ENCODE measurements at regions of chr1 and their contacts with region 1.

Region 1: DNA sequence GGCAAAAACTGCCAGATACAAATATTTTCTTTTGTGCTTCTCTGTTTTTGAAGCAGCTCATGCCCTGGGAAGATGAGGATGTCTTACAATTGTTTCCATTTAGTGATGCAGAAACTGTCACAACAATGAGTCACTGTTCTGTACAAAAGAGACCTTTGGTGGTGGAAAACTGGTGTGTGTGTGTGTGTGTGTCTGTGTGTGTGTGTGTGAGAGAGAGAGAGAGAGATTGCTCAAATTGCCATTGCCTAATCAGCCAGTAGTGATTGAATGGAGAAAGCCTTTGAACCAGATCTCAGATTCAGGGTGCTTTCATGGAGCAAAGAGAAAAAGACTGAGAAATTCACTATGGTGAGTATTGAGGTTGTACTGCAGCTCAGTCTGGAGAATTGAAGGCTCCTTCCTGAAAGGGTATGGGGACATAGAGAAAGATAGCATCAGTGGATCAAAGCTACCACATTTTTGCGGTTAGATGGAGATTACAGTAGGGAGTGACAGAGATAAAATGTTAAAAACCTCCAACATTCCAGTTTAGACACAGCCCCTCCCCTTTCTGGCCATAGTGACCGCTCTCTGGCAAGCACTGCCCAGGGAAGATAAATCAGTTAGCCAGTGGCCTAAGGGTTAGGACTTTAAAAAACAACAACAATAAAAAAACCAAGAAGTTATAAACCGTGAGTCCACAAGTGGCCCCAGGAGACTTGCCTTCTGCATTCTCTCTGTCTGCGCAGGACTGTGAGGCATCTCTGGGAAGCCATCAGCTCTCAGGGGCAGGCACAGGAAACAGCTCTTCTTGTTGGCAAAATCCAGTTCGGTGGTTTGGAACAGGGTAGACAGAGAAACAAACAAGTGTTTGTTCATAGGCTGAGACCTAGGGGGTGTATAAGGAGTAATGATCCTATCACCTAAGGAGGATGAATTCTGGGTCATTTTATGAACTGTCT is 406.5 kb downstream of the DUSP10 start:
- DNase-seq: peak; percentile 80 to 84
- H3K4me3 ChIP-seq: no peak overlapping the region
- H3K4me3 Mint-ChIP-seq: peak overlapping the region; percentile 7
- H3K27ac Mint-ChIP-seq: peak overlapping the region; percentile 73
- H3K4me1 ChIP-seq: peaks cover 27% of the 10 kb centered on the region
- H3K4me1 Mint-ChIP-seq: peaks cover 25% of the 10 kb centered on the region
- H3K27me3 ChIP-seq: no peaks in the 10 kb centered on the region
- H3K27me3 Mint-ChIP-seq: no peaks in the 10 kb centered on the region
- CTCF ChIP-seq: no peak

Region 2: GRCh38 chr1:221263831-221264767 is 71.3 kb before region 1 on chr1:
- CTCF ChIA-PET with region 1: interaction called, 5 read pairs
- POLR2A ChIA-PET with region 1: no interaction called
- intact Hi-C with region 1: loop called (anchors 1 kb)
- DNase-seq: peak; percentile 64 to 69
- H3K4me3 ChIP-seq: no peak overlapping the region
- H3K4me3 Mint-ChIP-seq: no peak overlapping the region
- H3K27ac Mint-ChIP-seq: no peak overlapping the region
- H3K4me1 ChIP-seq: no peaks in the 10 kb centered on the region
- H3K4me1 Mint-ChIP-seq: no peaks in the 10 kb centered on the region
- H3K27me3 ChIP-seq: no peaks in the 10 kb centered on the region
- H3K27me3 Mint-ChIP-seq: peaks cover 8% of the 10 kb centered on the region
- CTCF ChIP-seq: peak; percentile 59 to 61

Region 3: GRCh38 chr1:221274373-221274772 is 61.1 kb before region 1 on chr1:
- CTCF ChIA-PET with region 1: no interaction called
- POLR2A ChIA-PET with region 1: no interaction called
- intact Hi-C with region 1: no loop called
- DNase-seq: no peak
- H3K4me3 ChIP-seq: no peak overlapping the region
- H3K4me3 Mint-ChIP-seq: no peak overlapping the region
- H3K27ac Mint-ChIP-seq: no peak overlapping the region
- H3K4me1 ChIP-seq: no peaks in the 10 kb centered on the region
- H3K4me1 Mint-ChIP-seq: no peaks in the 10 kb centered on the region
- H3K27me3 ChIP-seq: no peaks in the 10 kb centered on the region
- H3K27me3 Mint-ChIP-seq: peaks cover 4% of the 10 kb centered on the region
- CTCF ChIP-seq: no peak

Measured in Caco-2 (cell line).